Prostate gland (tissue), 2 donors: ENCODE measurements at regions of chr18 and their contacts with region 1.

Region 1: GRCh38 chr18:21111341-21112139 is at the start of gene ROCK1:
- DNase-seq: peak; percentile 96
- H3K4me3 ChIP-seq: peak within 1 kb of the TSS; percentile 88 to 98
- H3K27ac ChIP-seq: peak within 1 kb of the TSS; percentile 97 to 99
- H3K4me1 ChIP-seq: no peaks in the 10 kb centered on the region
- H3K27me3 ChIP-seq: no peaks in the 10 kb centered on the region
- CTCF ChIP-seq: peak in 1 of 4 experiments; percentile 18
- POLR2A ChIP-seq: peak; percentile 74
- total RNA-seq, gene ROCK1: 32.2 to 35.2 TPM

Region 2: DNA sequence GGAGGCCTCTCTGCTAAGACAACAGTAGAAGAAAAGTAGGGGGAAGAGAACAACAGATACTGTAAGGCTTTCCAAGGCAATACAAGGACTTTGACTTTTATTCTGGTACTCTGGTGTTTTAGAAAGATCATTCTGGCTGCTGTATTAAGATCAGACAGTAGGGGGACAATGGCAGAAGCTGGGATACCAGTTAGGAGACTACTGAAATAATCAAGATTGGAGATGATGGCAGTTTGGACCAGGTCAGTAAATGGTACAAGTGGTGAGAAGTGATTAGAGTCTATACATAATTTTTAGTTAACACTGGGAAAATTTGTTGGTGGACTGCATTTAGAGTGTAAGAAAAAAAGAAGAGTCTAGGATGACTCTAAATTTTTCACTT is 139.7 kb before region 1 on chr18:
- intact Hi-C with region 1: loop called (anchors 10 kb)
- DNase-seq: no peak
- H3K4me3 ChIP-seq: no peak overlapping the region
- H3K27ac ChIP-seq: no peak overlapping the region
- H3K4me1 ChIP-seq: no peaks in the 10 kb centered on the region
- H3K27me3 ChIP-seq: no peaks in the 10 kb centered on the region
- CTCF ChIP-seq: peak in 2 of 4 experiments; percentile 25 to 27
- POLR2A ChIP-seq: no peak

Region 3: DNA sequence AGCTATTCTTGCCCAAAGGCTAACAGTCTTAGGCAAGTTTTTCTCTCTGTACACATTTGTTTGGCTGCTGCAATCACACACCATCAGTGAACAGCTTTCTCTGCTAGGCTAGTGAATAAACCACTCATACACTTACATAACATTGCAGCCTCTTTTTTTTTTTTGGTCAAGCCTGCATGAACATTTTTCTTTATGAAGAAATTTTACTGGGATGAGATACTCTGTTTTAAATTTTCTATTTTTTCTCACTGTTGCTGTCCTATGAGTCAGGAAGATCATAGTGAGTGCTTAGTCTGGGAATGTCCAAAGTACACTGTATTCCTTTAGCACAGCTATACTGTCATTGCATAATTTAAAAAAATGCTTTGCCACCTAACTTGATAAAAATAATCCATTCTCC is 58.4 kb before region 1 on chr18:
- intact Hi-C with region 1: loop called (anchors 10 kb)
- DNase-seq: no peak
- H3K4me3 ChIP-seq: no peak overlapping the region
- H3K27ac ChIP-seq: no peak overlapping the region
- H3K4me1 ChIP-seq: no peaks in the 10 kb centered on the region
- H3K27me3 ChIP-seq: no peaks in the 10 kb centered on the region
- CTCF ChIP-seq: no peak
- POLR2A ChIP-seq: no peak